Panc1 (cell line): ENCODE measurements at regions of chr11 and their contacts with region 1.

Region 1: GRCh38 chr11:55719608-55720160 is 53.6 kb upstream of the OR5D13 start:
- DNase-seq: no peak
- ATAC-seq: no peak
- H3K4me3 ChIP-seq: no peak overlapping the region
- H3K27ac ChIP-seq: no peak overlapping the region
- H3K4me1 ChIP-seq: no peaks in the 10 kb centered on the region
- H3K27me3 ChIP-seq: no peaks in the 10 kb centered on the region
- CTCF ChIP-seq: no peak

Region 2: DNA sequence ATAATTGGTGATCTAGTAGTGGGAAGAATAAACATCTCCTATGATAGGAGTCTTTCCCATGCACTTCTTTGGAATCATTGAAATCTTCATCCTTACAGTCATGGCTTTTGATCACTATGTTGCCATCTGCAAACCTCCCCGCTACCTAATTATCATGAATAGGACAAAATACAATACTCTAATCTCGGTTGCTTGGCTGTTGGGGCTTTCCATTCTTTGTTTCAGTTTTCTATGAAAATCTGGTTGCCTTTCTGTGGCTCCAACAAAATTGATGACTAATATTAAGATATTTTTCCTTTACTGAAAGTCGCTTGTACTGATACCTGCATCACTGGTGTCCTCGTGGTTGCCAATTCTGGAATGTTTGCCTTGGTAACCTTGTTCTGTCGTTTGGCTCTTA is 45.8 kb before region 1 on chr11:
- CTCF ChIA-PET with region 1: no interaction called
- POLR2A ChIA-PET with region 1: no interaction called
- in situ Hi-C with region 1: no loop called
- intact Hi-C with region 1: loop called (anchors 5 kb)
- DNase-seq: no peak
- ATAC-seq: no peak
- H3K4me3 ChIP-seq: no peak overlapping the region
- H3K27ac ChIP-seq: no peak overlapping the region
- H3K4me1 ChIP-seq: no peaks in the 10 kb centered on the region
- H3K27me3 ChIP-seq: no peaks in the 10 kb centered on the region
- CTCF ChIP-seq: no peak

Region 3: DNA sequence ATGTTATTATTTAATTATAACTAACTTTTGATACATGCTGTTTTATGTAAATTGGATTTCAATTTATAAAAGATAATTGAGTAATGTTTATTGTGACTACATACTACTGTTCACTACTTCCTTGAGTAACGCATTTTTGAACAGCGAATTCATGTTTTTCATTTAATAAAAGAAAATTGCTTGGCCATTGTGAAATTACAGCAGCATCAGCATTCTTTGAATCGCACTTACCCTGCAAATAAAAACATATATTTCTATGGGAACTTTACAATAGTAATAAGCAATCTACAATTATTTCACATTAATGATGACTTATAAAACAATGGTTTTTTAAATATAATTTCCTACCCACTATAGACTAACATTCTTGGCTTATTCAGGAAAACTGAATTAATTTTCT is 477.0 kb after region 1 on chr11:
- CTCF ChIA-PET with region 1: no interaction called
- POLR2A ChIA-PET with region 1: no interaction called
- in situ Hi-C with region 1: no loop called
- intact Hi-C with region 1: no loop called
- DNase-seq: no peak
- ATAC-seq: no peak
- H3K4me3 ChIP-seq: no peak overlapping the region
- H3K27ac ChIP-seq: no peak overlapping the region
- H3K4me1 ChIP-seq: no peaks in the 10 kb centered on the region
- H3K27me3 ChIP-seq: no peaks in the 10 kb centered on the region
- CTCF ChIP-seq: no peak